Activated CD4-positive, alpha-beta memory T cell treated with anti-CD3 and anti-CD28 coated beads, Interleukin-2, amount 10 ng/mL, durations not matched to agents 7 days and 5 days (primary cell): ENCODE measurements at regions of chr11 and their contacts with region 1.

Region 1: DNA sequence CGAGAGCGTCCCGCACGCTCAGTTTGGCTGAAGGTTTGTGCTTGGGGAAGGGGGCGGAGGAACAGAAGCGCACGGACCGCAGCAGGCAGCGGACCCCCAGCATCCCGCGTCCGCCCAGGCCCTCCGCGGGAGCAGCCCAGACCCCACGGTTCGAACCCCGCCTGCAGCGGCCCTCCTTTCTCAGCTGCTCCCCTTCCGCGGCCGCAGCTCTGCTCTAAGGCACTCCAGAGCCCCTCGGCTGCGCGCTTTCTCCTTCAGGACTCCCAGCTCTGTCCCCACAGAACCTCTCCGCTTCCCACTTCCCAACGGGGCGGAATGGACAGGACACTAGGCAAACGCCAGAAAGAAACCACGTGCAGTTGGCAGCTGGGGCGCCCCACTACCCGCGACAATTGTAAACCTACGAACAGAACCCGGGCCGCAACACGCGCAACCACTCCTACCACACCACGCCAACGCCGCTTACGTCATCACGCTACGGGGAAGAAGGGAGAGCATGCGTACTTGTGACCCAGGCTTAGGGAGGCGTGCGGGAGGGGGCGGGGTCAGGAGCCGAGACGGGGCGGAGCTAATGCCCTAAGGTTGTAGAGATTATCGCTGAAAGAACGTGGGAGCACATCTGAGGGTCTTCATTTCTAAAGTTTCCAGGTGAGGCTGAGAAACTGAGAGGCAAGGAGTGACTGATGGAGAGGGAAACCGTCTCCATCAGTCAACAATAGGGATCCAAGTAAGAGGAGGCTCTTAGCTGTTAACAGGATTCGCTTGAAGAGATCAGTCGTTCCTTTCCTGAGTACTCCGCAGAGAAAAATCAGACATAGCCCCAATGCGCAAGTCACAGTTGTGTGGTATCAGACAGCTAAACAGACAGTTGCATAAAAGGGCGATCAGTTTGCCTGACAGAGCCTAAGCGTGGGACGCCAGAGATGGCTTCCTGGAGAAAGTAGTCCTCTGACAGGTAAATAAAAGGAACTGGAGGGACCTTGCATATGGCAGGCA is at the start of gene NARS2:
- DNase-seq: peak; percentile 98
- H3K4me3 Mint-ChIP-seq: peak within 1 kb of the TSS; percentile 86
- H3K27ac Mint-ChIP-seq: peak within 1 kb of the TSS; percentile 71
- H3K4me1 Mint-ChIP-seq: peaks cover 31% of the 10 kb centered on the region
- H3K27me3 Mint-ChIP-seq: no peaks in the 10 kb centered on the region
- total RNA-seq, gene NARS2: 13.4 to 13.9 TPM

Region 2: GRCh38 chr11:78228467-78228866 is 346.2 kb before region 1 on chr11:
- CTCF ChIA-PET with region 1: interaction called, 10 read pairs
- POLR2A ChIA-PET with region 1: interaction called, 3 read pairs
- DNase-seq: peak; percentile 25
- H3K4me3 Mint-ChIP-seq: no peak overlapping the region
- H3K27ac Mint-ChIP-seq: no peak overlapping the region
- H3K4me1 Mint-ChIP-seq: peaks cover 58% of the 10 kb centered on the region
- H3K27me3 Mint-ChIP-seq: no peaks in the 10 kb centered on the region

Region 3: GRCh38 chr11:78595436-78596130 is 20.9 kb after region 1 on chr11:
- CTCF ChIA-PET with region 1: no interaction called
- POLR2A ChIA-PET with region 1: interaction called, 11 read pairs
- DNase-seq: no peak
- H3K4me3 Mint-ChIP-seq: no peak overlapping the region
- H3K27ac Mint-ChIP-seq: no peak overlapping the region
- H3K4me1 Mint-ChIP-seq: peaks cover 20% of the 10 kb centered on the region
- H3K27me3 Mint-ChIP-seq: peaks cover 29% of the 10 kb centered on the region